Transverse colon (tissue), 4 donors: ENCODE measurements at regions of chr4 and their contacts with region 1.

Region 1: GRCh38 chr4:4791299-4792111 is 68.0 kb upstream of the MSX1 start:
- DNase-seq: no peak
- H3K4me3 ChIP-seq: no peak overlapping the region
- H3K27ac ChIP-seq: no peak overlapping the region
- H3K4me1 ChIP-seq: no peaks in the 10 kb centered on the region
- H3K27me3 ChIP-seq: no peaks in the 10 kb centered on the region
- CTCF ChIP-seq: no peak
- EP300 ChIP-seq: no peak
- POLR2A ChIP-seq: no peak

Region 2: DNA sequence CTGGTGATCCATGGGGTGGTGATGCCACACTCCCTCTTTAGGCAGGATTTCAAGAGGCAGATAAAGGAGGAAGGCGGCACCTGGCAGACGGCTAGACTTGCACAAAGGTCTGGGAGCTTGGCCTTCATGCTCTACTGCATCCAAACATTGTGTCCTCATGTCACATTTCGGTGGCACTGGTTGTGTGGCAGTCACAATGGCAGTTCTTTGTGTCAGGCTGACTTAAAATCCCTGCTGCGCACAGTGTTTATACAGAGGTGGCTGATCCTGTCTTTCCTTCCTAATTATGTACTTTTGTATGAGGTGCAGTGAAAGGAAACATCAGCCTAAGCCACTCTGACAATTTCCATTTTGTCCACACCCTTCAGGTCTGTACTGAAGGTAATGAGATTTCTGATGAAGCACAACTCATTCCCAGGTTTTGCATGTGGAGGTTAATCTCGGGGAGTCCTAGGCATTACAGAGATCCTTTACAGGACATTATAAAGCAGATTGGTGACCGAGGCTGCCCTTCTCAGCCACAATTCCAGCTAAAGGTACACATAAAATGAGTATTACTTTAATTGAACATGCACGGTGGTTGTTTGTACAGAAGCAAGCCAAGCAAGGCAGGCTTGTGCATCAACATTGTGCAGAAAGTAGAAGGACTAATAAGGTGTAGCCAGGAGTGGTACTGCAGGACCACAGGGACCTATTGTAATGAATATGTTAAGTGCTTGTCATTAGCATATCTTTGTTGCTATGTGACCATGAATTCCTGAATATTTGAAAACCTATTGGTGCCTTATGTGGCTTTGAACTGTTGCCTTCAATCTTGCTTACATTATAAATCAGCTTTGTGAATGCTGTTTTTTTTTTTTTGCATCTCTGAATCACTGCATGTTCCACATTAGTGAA is 407.4 kb after region 1 on chr4:
- in situ Hi-C with region 1: no loop called
- intact Hi-C with region 1: loop called (anchors 5 kb)
- DNase-seq: no peak
- H3K4me3 ChIP-seq: no peak overlapping the region
- H3K27ac ChIP-seq: no peak overlapping the region
- H3K4me1 ChIP-seq: no peaks in the 10 kb centered on the region
- H3K27me3 ChIP-seq: no peaks in the 10 kb centered on the region
- CTCF ChIP-seq: no peak
- EP300 ChIP-seq: no peak
- POLR2A ChIP-seq: no peak